ENCODE measurements at regions of chr3 and their contacts with region 1.

Region 1: GRCh38 chr3:33798411-33799201 is at the start of gene PDCD6IP:
- DNase-seq: peak; percentile 92
- H3K4me3 ChIP-seq: peak within 1 kb of the TSS; percentile 84
- H3K27ac ChIP-seq: peak within 1 kb of the TSS; percentile 56
- H3K4me1 ChIP-seq: peaks cover 32% of the 10 kb centered on the region
- CTCF ChIP-seq: peak; percentile 34; the same call in 1 of the 2 replicates
- total RNA-seq, gene PDCD6IP: 75.5 and 126 TPM in 2 replicates

Region 2: DNA sequence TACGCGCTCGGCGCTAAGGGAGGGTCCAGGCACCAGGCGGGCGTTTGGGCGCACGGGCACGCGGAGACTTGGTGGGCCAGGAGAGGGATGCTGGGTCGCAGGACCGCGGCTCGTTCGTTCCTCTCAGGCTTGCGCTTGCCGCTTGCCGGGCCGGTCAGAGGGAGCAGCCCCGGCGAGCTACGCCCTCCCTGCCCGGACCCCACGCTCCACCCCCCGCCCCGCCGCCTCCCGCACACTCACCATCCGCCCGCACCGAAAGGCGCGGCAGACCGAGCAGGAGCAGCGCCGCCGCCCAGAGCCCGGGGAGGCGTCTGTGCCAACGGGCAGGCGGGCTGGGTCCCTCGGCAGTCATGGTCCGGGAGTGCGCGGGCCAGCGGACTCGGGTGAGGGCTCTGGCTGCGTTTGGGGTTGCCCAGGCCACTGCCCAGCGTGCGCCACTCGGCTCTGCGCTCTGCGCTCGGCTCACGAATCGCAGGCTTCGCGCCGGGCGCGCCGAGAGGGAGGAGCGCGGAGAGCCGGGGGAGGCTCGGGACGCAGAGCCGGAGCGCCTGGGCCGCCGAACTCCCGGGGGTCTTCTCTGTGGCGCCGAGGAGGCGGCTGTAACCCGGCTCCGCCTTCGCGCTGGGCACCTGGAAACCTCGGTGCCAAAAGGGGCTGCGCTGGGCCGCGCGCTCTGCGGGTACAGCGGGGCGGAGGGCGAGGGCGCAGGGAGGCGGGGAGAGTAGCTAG is 580.0 kb before region 1 on chr3 and contains the start of gene SUSD5:
- CTCF ChIA-PET with region 1: no interaction called
- POLR2A ChIA-PET with region 1: no interaction called
- intact Hi-C with region 1: no loop called
- DNase-seq: no peak
- H3K4me3 ChIP-seq: no peak within 1 kb of the TSS
- H3K27ac ChIP-seq: no peak within 1 kb of the TSS
- H3K4me1 ChIP-seq: no peaks in the 10 kb centered on the region
- CTCF ChIP-seq: no peak
- total RNA-seq, gene SUSD5: not detected in 2 replicates

Region 3: DNA sequence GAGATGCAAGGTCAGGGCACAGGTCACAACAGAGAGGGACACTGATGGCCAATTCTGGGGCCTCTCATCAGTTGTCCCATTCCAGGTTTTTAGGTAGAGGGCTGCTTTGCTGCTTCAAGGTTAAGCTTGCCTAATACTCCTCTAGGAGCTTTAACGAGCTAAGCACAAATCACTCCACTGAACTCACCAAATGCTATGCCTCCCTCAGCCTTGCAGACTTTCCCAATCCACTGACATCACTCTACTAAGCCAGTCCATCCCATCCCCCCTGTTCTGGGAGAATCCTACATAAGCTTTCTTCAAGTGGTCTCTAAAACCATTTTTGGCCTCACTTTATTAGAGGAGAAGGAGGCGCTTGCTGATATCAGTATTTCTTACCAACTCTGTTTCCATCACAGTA is 25.0 kb before region 1 on chr3:
- CTCF ChIA-PET with region 1: no interaction called
- POLR2A ChIA-PET with region 1: interaction called, 10 read pairs
- intact Hi-C with region 1: no loop called
- DNase-seq: no peak
- H3K4me3 ChIP-seq: no peak overlapping the region
- H3K27ac ChIP-seq: no peak overlapping the region
- H3K4me1 ChIP-seq: no peaks in the 10 kb centered on the region
- CTCF ChIP-seq: no peak

Region 4: DNA sequence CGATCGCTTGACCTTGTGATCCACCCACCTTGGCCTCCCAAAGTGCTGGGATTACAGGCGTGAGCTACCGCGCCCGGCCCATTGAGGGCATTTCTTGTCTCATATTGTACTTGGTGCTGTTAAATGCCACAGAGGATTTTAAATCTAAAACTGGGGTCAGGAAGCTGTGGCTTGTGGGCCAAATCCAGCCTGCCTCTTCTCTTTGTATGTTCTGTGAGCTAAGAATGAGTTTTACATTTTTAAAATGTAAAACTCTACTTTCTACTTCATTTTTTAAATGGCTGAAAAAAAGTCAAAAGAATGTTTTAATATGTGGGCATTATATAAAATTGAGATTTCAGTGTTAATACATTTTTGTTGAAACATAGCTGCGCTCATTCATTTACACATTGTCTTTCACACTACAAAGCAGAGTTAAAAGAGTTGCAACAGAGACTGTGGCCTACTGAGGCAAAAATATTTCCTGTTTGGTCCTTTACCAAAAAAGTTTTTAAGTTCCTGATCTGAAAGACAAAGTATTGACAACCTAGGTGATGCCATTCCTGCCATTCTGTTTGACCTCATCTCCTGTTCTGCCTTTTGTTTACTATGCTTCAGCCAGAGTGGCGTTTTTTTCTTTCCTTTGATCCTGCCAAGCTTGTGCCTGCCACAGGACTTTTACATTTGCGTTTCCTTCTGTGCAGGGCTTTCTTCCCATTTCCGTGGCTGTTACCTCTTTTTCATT is 50.2 kb after region 1 on chr3:
- CTCF ChIA-PET with region 1: no interaction called
- POLR2A ChIA-PET with region 1: no interaction called
- intact Hi-C with region 1: no loop called
- DNase-seq: no peak
- H3K4me3 ChIP-seq: no peak overlapping the region
- H3K27ac ChIP-seq: no peak overlapping the region
- H3K4me1 ChIP-seq: no peaks in the 10 kb centered on the region
- CTCF ChIP-seq: no peak

Region 5: DNA sequence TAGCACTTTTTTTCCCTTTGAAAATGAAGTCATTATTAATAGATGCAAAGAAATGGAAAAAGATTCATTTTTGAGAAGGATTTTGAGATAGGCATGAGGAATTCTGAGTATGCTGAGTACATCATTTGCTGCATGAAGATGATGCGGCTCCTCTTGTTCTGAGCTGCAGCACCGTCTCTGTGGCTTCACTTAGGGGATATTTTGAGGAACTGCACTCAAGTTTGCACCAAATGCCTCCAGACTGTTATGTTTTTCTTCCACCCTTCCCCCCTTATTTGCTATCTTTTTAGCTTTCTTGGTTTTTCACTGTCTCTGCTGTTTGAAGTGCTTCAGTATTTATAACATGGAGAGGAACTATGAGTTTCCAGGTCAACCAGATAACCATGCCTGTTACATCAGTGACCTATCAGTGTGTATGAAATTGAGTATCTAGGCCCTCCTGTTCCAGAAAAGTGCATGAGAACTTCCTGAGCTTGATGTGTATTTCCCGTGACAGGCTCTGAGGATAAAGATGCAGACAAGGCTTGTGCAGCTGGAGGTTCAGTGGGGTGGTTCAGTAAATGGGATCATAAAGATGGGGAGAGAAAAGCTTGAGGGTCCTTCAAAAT is 128.5 kb after region 1 on chr3:
- CTCF ChIA-PET with region 1: no interaction called
- POLR2A ChIA-PET with region 1: no interaction called
- intact Hi-C with region 1: no loop called
- DNase-seq: no peak
- H3K4me3 ChIP-seq: no peak overlapping the region
- H3K27ac ChIP-seq: no peak overlapping the region
- H3K4me1 ChIP-seq: no peaks in the 10 kb centered on the region
- CTCF ChIP-seq: no peak

Measured in OCI-LY7 (cell line).